Aorta (tissue), 5 donors: ENCODE measurements at regions of chr2 and their contacts with region 1.

Region 1: DNA sequence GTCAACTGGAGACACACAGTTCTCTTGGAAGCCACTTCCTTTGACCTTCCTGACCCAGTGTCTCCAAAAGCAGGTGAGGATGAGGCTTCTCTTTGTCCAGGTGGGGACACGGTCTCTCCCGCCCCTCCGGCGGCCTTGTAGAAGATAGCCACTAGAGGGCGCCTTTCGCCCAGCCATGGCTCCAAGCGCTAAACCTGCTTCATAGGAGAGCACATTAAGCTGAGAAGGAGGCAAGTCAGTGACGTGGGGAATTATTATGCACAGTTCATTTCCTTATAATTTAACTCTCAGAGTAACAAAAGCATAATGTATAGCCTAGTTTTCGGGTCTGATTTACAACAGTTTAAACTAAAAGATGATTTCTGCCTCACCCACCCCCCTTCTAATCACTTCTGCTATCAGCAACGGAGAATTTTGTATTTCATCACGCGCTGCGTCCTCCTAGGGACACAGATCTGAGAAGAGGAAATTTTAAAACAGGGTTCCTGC is 208.7 kb downstream of the ICOS start:
- DNase-seq: peak; percentile 78 to 90
- ATAC-seq: peak; percentile 95
- H3K4me3 ChIP-seq: peak overlapping the region; percentile 70 to 86
- H3K27ac ChIP-seq: no peak overlapping the region
- H3K4me1 ChIP-seq: no peaks in the 10 kb centered on the region
- H3K27me3 ChIP-seq: no peaks in the 10 kb centered on the region

Region 2: GRCh38 chr2:203928849-203929248 is 216.5 kb before region 1 on chr2:
- intact Hi-C with region 1: loop called in 1 of 2 experiments (anchors 10 kb)
- DNase-seq: no peak
- ATAC-seq: peak; percentile 46
- H3K4me3 ChIP-seq: no peak overlapping the region
- H3K27ac ChIP-seq: no peak overlapping the region
- H3K4me1 ChIP-seq: peaks cover 0 to 5% of the 10 kb centered on the region in 2 donors
- H3K27me3 ChIP-seq: no peaks in the 10 kb centered on the region

Region 3: DNA sequence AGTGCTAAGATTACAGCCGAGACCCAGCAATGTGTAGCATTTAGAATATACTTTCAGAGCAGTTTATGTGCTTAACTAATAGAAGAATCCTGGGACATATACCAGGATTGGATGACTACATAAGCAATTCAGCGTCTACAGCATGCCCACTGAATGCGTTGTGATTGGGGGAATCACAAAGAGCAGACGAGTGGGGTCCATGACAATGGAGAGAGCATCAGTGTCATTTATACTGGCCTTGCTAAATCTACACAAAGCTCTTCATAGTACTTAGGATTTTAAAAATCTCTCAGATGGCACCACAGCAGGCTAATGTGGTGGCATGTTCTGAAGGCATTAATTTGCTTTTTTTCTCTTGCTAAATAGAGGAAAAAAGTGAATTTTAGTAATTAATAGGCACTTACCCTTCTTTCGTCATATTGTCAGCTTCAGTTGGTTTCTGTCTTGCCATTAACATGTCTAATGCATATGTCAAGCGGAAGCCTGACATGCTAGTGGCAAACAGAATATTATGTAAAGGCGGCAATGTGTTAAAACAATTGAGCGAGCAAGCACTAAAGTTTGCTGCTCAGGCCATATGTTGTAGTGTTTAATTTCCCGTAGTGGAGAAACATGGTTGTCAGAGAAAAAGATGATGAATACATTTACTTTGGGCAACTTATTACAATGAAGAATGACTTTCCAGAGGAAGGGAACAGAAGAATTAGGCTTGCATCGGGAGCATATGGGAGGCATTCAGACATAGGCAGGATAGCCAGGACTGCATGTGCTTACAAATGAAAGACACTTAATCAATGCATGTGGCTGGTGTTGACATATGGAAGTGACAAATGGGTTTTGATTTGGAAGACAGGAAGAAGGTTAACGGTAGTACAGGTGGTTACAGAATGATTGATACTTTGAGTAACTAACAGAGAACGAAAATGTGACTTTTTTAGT is 63.6 kb before region 1 on chr2:
- intact Hi-C with region 1: no loop called
- DNase-seq: no peak
- ATAC-seq: no peak
- H3K4me3 ChIP-seq: no peak overlapping the region
- H3K27ac ChIP-seq: no peak overlapping the region
- H3K4me1 ChIP-seq: no peaks in the 10 kb centered on the region
- H3K27me3 ChIP-seq: no peaks in the 10 kb centered on the region

Region 4: DNA sequence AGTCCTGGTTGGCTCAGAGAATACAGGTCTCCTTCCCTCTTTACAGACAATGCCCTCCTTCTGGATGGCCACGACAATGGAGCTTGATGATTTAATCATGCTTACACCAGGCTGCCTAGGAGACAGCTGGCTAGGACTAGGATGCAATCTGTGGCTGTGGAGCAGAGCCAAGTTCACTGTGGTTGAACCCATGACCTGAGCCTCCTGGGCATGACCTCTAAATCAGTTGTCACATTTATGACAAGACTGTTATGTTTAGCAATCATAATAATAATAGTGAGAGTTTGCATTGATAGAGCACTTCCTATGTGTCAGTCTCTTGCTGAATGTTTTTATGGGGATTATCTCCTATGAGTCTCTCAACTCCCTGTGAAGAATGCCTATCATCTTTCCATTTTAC is 35.3 kb after region 1 on chr2:
- intact Hi-C with region 1: loop called in 1 of 2 experiments (anchors 5 kb)
- DNase-seq: no peak
- ATAC-seq: no peak
- H3K4me3 ChIP-seq: no peak overlapping the region
- H3K27ac ChIP-seq: no peak overlapping the region
- H3K4me1 ChIP-seq: no peaks in the 10 kb centered on the region
- H3K27me3 ChIP-seq: no peaks in the 10 kb centered on the region

Region 5: DNA sequence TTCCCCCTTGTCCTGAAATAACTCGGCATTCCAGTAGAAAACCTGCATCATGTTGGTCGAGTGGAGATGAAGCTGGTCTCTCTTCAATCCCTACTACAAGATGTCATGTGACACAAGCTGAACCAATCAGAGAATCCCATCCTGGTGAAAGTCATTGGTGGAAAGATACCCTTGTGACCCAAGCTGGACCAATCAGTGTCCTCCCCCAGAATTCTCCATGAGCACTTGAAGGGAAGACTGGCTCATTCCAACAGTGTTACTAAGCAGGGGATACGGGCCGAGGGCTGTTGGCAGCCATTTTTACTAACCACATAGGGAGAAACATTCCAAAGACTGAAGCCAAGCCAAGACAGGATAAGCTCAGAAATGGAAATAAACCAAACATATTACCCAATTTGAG is 89.6 kb after region 1 on chr2:
- intact Hi-C with region 1: no loop called
- DNase-seq: peak in 1 of 2 donors; percentile 55
- ATAC-seq: peak; percentile 33
- H3K4me3 ChIP-seq: no peak overlapping the region
- H3K27ac ChIP-seq: peak overlapping the region in 1 of 2 donors; percentile 57
- H3K4me1 ChIP-seq: peaks cover 4 to 8% of the 10 kb centered on the region in 2 donors
- H3K27me3 ChIP-seq: no peaks in the 10 kb centered on the region

Region 6: GRCh38 chr2:204260162-204260877 is 115.0 kb after region 1 on chr2:
- intact Hi-C with region 1: loop called in 1 of 2 experiments (anchors 10 kb)
- DNase-seq: peak in 1 of 2 donors; percentile 74
- ATAC-seq: peak; percentile 82
- H3K4me3 ChIP-seq: no peak overlapping the region
- H3K27ac ChIP-seq: no peak overlapping the region
- H3K4me1 ChIP-seq: no peaks in the 10 kb centered on the region
- H3K27me3 ChIP-seq: no peaks in the 10 kb centered on the region